Kidney (tissue), 22 donors: ENCODE measurements at regions of chr3 and their contacts with region 1.

Region 1: DNA sequence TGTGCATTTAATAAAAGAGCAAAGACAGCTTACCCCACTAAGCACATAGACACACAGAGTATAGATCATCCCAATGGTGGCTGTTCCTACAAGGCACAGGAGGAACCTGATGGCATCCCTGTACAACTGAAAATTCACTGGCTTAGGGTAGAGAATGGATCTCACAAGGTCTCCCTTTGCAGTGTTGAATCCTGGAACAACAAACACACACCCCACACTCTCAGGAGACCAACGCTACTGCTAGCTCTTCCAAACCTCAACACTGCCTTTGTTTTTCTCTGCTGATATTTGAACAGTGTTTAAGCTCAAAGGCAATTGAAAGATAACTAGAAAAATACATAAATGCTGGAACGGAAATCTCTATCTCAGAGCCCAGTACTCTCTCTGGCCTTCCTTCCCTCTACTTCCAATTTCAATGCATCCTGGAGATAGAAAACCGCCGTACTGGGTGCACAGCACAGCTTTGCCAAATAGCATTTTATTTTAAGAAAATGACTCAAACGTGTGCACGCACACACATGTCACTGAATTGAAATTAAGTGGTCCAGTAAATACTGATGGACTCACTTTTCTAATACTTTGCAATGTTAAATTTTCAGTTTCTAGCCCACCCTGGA is 87.5 kb upstream of the ATP13A5 start:
- DNase-seq: no peak
- H3K4me3 ChIP-seq: no peak overlapping the region
- H3K27ac ChIP-seq: no peak overlapping the region
- H3K4me1 ChIP-seq: no peaks in the 10 kb centered on the region
- H3K27me3 ChIP-seq: no peaks in the 10 kb centered on the region
- CTCF ChIP-seq: no peak

Region 2: DNA sequence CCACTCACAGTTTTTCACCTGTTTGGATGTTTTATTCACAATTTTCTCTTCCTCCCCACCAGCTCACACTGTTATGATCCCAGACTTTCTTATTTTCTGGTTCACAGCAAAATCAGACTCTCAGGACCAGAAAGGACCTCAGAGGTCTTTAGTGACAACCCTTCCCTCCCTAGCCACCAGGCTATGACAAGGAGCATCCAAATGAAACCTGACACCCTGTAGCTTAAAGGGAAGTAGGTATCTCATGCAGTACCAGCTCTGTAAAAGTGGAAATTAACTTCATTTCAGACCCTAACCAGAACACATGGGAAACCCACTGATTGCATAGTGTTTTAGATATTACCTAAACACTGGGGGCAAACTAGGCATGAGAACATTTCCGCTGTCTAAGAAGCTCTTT is 132.9 kb before region 1 on chr3:
- intact Hi-C with region 1: no loop called
- DNase-seq: peak in 2 of 5 donors; percentile 22 to 30
- H3K4me3 ChIP-seq: no peak overlapping the region
- H3K27ac ChIP-seq: no peak overlapping the region
- H3K4me1 ChIP-seq: peaks cover 0 to 2% (median 0%) of the 10 kb centered on the region in 3 donors
- H3K27me3 ChIP-seq: no peaks in the 10 kb centered on the region
- CTCF ChIP-seq: no peak

Region 3: DNA sequence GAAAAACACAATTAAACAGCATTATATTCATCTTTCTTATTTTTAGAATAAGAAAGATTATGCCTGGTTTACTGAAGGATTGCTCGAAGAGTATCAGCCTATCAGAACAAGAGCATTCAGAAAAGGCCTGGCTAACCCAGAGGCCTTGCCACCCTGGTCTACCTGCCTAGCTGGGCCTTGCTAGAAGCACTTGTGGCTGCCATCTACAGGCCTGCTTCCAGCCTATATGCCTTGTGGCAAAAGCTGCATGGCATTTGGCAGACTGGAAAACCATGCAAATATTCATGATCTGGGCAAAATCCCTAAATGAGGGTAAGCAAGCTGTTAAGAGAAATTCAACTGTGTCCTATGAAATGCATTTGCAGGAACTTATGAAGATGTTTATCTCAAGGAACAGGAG is 97.9 kb after region 1 on chr3:
- intact Hi-C with region 1: loop called (anchors 10 kb)
- DNase-seq: peak in 2 of 5 donors; percentile 10 to 12
- H3K4me3 ChIP-seq: no peak overlapping the region
- H3K27ac ChIP-seq: no peak overlapping the region
- H3K4me1 ChIP-seq: no peaks in the 10 kb centered on the region
- H3K27me3 ChIP-seq: no peaks in the 10 kb centered on the region
- CTCF ChIP-seq: peak; percentile 44

Region 4: DNA sequence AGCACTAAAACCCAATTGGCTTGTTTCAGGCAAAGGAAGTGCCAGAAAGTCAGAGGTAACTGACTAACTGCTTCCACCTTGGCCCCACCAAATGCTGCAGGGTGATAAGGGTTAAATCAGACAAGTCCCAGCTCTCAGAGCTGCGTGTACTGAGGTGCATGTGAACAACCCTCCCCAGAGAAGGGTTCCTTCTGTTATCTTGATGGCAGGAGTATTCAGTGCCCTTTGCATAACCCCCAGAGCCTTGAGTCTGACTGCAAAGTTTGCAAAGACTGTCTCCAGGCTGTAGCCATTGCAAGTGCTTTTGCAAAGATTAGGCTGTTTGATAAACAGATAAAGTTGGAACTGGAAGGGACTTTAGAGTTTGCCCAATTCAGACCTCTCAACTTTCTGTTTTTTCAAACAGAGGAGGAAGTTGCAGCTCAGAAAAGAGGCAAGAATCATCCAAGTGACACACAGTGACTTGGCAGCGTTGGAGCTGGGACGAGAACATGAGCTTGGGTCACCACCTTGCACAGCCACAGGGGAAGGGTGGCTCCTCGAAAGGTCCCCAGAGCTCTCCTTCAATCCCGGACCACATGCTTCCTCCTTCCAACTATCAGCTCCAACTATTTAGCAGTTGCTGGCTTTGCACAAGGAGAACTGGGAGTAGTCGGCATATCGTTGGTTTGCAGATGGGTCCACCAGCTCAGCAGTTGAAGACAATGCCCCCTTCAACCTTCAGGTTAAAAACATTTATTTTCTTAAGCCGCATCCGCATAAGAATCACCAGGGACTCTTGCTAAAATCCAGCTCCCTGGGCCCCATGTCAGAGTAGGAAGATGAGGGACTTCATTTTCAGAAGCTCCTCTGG is 445.0 kb after region 1 on chr3:
- intact Hi-C with region 1: no loop called
- DNase-seq: peak in 1 of 5 donors; percentile 83
- H3K4me3 ChIP-seq: no peak overlapping the region
- H3K27ac ChIP-seq: no peak overlapping the region
- H3K4me1 ChIP-seq: peaks cover 0 to 7% (median 0%) of the 10 kb centered on the region in 3 donors
- H3K27me3 ChIP-seq: no peaks in the 10 kb centered on the region
- CTCF ChIP-seq: no peak